Dendritic cell treated with granulocyte-macrophage colony-stimulating factor and Interleukin-4, amounts not matched to agents 40 ng/mL and 50 ng/mL, for 4 days (primary cell): ENCODE measurements at regions of chr20 and their contacts with region 1.

Region 1: DNA sequence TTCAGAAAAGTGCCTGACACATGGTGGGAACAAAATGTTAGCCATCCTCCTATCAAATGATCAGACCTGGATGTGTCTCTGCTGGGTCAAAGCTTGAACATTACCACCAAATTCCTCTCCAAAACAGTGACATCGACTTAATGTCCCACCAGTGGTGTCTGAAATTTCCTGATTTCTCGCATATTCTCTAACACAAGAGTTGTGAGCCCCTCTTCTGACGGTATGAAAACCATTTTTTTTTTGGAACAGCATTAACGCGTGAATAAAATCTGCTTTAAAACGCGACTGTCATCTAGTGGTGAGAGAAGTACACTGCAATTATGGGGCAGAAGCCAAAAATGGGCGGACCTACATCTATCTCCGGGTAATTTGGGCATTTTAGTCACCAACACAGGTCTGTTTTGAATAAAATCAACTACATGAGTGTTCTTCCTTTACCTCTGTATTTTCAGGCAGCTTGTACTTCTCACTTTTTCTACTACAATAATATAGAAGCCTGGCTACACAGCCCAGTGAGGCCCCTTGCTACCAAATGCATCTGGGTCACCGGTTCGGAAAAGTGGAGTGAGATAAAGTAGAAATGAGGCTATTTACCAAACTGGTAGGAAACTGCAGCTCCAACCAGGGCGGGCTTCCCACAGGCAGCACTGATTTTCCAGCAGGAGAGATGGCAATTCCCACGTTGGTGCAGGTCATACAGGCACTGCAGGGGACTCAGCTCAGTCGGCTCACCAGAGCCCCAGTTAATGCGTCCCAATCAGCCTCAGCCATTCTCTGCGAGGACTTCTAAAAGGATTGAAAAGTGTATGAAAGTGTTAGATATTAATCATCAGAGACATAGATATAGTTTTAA is 27.4 kb downstream of the MGME1 start:
- H3K4me3 Mint-ChIP-seq: no peak overlapping the region
- H3K27ac Mint-ChIP-seq: no peak overlapping the region
- H3K4me1 Mint-ChIP-seq: peaks cover 6% of the 10 kb centered on the region
- H3K27me3 Mint-ChIP-seq: no peaks in the 10 kb centered on the region

Region 2: GRCh38 chr20:17504898-17505635 is 491.1 kb before region 1 on chr20:
- intact Hi-C with region 1: loop called (anchors 1 kb)
- H3K4me3 Mint-ChIP-seq: peak overlapping the region; percentile 79
- H3K27ac Mint-ChIP-seq: peak overlapping the region; percentile 68
- H3K4me1 Mint-ChIP-seq: peaks cover 21% of the 10 kb centered on the region
- H3K27me3 Mint-ChIP-seq: peaks cover 7% of the 10 kb centered on the region

Region 3: DNA sequence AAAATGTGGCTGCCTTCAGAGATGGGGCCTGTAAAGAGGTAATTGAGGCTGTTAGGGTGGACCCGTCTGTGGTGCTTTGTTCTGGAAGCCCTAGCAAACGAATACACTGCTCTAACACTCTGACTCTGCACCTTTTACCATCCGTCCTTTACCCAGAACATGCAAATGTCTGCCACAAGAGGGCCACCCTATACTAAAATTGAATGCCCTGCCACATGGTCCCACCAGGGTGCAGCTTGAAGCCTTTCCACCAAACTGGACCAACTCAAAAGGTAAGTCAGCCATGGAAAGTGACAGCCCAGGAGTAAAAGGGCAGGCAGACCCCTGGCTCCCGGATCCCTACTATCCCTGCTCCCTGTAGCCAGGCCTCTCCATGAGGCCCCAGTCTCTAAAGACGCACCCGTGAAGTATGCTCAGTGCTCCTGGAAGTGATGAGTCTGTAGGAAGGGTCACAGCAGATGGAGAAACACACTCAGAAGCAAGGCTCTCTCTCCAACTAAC is 459.2 kb before region 1 on chr20:
- intact Hi-C with region 1: loop called (anchors 5 kb)
- H3K4me3 Mint-ChIP-seq: no peak overlapping the region
- H3K27ac Mint-ChIP-seq: no peak overlapping the region
- H3K4me1 Mint-ChIP-seq: peaks cover 5% of the 10 kb centered on the region
- H3K27me3 Mint-ChIP-seq: peaks cover 8% of the 10 kb centered on the region

Region 4: DNA sequence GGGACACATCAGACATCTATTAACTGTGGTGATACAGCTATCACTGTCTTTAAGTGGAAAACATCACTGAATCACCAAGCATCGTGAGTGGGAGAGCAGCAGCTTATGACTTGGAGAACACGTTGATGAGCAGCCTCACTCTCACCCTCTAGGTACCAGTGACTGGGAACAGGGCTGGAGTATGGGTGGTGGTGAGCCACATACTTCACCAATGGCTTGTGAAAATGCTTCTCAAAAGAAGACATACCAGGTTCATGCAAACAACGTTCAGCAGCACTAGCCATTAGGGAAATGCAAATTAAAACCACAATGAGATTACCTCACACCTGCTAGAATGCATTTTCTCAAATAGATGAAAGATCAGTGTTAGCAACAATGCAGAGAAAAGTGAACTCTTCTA is 52.9 kb before region 1 on chr20:
- intact Hi-C with region 1: loop called (anchors 10 kb)
- H3K4me3 Mint-ChIP-seq: peak overlapping the region; percentile 30
- H3K27ac Mint-ChIP-seq: peak overlapping the region; percentile 31
- H3K4me1 Mint-ChIP-seq: peaks cover 64% of the 10 kb centered on the region
- H3K27me3 Mint-ChIP-seq: no peaks in the 10 kb centered on the region